Activated T-helper 2 cell treated with anti-CD3 and anti-CD28 coated beads, Interferon-gamma antibody, Interleukin-2, Interleukin-4, amounts not matched to agents 10 μg/mL and 5 μg/mL and 100 μg/mL, durations not matched to agents 14 hours and 24 hours and 36 hours (primary cell): ENCODE measurements at regions of chr11 and their contacts with region 1.

Region 1: GRCh38 chr11:118791111-118791965 is at the start of gene DDX6:
- DNase-seq: peak; percentile 87
- H3K4me3 Mint-ChIP-seq: peak within 1 kb of the TSS; percentile 97
- H3K27ac Mint-ChIP-seq: peak within 1 kb of the TSS; percentile 96
- H3K4me1 Mint-ChIP-seq: peaks cover 25% of the 10 kb centered on the region
- H3K27me3 Mint-ChIP-seq: no peaks in the 10 kb centered on the region
- total RNA-seq, gene DDX6: 132 and 135 TPM in 2 replicates

Region 2: DNA sequence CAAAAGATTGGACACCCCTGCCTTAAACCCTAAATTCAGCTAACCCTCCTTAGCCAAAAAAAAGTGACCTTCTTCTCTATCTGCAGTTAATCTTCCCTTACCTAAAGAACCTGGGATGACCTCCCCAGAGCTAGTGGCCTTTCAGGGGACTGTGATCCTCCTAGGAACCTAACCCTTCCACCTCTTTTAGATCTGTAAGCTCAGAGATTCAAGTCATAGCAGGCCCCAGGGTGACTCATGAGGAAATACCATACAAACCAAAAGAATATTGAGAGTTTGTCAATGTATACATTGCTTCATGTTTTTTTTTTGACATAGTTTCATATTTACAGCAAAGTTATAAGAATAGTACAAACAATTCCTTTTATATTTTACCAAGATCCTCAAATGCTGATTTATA is 54.0 kb after region 1 on chr11:
- intact Hi-C with region 1: loop called (anchors 2 kb)
- DNase-seq: no peak
- H3K4me3 Mint-ChIP-seq: no peak overlapping the region
- H3K27ac Mint-ChIP-seq: peak overlapping the region; percentile 80
- H3K4me1 Mint-ChIP-seq: peaks cover 23% of the 10 kb centered on the region
- H3K27me3 Mint-ChIP-seq: no peaks in the 10 kb centered on the region

Region 3: DNA sequence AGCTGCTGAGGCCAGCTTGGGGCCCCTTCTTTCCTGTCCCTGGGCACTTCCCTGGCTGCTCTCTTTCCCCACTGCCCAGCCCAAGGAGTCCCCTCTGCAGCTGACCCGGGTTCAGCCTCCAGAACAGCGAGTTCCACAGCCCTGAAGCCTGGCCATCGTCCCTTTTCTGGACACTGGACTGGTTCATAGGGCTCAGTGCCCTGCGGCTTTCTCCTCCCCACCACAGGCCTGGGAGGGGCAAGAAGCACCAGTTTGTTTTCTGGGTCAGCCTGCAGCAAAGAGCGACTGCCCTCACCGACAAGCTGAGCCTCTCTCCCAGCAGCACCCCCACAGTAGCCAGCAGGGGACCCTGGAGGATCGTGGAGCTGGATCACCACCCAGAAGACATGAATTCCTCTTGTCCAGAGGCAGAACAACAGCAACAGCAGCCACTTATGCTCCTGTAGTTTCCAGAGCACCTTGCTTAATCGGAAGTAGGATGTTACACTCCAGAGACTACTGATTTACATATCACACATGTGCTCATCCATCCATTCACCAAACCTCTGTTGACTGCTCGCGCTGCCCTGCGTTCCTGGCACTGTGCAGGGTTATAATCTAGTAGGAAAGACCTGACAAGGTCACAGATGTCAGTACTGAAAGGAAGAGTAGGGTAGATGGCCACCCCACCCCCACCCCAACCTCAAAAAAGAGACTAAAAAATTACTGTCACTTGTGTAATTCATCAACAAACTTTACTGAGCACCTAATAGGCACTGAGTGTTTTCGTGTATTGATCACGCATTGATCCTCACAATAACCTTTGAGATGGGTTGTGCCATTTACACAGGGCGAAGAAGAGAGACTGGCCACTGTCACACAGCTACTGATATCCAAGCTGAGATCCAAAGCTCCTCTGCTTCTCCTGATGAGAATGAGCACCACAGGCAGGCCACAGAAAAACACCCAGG is 79.3 kb after region 1 on chr11:
- intact Hi-C with region 1: loop called (anchors 1 kb)
- DNase-seq: no peak
- H3K4me3 Mint-ChIP-seq: peak overlapping the region; percentile 61
- H3K27ac Mint-ChIP-seq: peak overlapping the region; percentile 94
- H3K4me1 Mint-ChIP-seq: peaks cover 40% of the 10 kb centered on the region
- H3K27me3 Mint-ChIP-seq: no peaks in the 10 kb centered on the region

Region 4: DNA sequence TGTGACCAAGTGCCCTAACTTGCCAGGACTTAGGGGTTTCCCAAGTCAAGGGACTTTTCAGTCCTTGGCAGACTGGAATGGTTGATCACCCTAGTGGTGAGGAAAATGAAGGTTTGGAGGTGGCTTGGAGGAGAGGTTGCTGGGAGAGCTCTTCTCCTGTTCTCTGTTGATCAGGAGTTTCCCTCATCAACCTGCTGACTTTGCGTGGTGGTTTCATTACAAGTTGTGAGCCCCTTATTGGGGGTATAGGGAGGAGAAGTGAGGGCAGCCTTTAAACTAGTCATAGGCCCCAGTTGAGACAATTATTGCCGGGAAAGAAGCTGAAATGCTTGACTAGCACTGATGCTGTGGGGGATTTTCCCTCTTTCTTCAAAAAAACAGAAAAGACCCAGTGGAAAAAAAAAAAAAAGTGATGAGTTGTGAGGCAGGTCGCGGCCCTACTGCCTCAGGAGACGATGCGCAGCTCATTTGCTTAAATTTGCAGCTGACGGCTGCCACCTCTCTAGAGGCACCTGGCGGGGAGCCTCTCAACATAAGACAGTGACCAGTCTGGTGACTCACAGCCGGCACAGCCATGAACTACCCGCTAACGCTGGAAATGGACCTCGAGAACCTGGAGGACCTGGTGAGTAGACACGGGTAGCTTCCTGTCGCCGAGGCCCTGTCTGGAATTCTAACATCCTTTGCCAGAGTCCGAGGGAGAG is 92.2 kb after region 1 on chr11 and contains the start of gene CXCR5:
- intact Hi-C with region 1: loop called (anchors 2 kb)
- DNase-seq: no peak
- H3K4me3 Mint-ChIP-seq: peak within 1 kb of the TSS; percentile 79
- H3K27ac Mint-ChIP-seq: peak within 1 kb of the TSS; percentile 86
- H3K4me1 Mint-ChIP-seq: peaks cover 62% of the 10 kb centered on the region
- H3K27me3 Mint-ChIP-seq: no peaks in the 10 kb centered on the region
- total RNA-seq, gene CXCR5: 7.5 and 8.1 TPM in 2 replicates

Region 5: GRCh38 chr11:118997627-118998387 is 206.5 kb after region 1 on chr11 and contains the start of gene CENATAC:
- intact Hi-C with region 1: loop called (anchors 1 kb)
- DNase-seq: peak; percentile 95
- H3K4me3 Mint-ChIP-seq: peak within 1 kb of the TSS; percentile 99
- H3K27ac Mint-ChIP-seq: peak within 1 kb of the TSS; percentile 98
- H3K4me1 Mint-ChIP-seq: peaks cover 21% of the 10 kb centered on the region
- H3K27me3 Mint-ChIP-seq: no peaks in the 10 kb centered on the region
- total RNA-seq, gene CENATAC: 44.2 and 47.7 TPM in 2 replicates